Mammary epithelial cell (primary cell): ENCODE measurements at regions of chr6 and their contacts with region 1.

Region 1: GRCh38 chr6:49625140-49625539 is 11.5 kb downstream of the RHAG start:
- DNase-seq: peak; percentile 10
- H3K4me3 ChIP-seq: no peak overlapping the region
- H3K27ac ChIP-seq: no peak overlapping the region
- H3K4me1 ChIP-seq: peaks cover 3% of the 10 kb centered on the region
- H3K27me3 ChIP-seq: no peaks in the 10 kb centered on the region
- CTCF ChIP-seq: no peak

Region 2: DNA sequence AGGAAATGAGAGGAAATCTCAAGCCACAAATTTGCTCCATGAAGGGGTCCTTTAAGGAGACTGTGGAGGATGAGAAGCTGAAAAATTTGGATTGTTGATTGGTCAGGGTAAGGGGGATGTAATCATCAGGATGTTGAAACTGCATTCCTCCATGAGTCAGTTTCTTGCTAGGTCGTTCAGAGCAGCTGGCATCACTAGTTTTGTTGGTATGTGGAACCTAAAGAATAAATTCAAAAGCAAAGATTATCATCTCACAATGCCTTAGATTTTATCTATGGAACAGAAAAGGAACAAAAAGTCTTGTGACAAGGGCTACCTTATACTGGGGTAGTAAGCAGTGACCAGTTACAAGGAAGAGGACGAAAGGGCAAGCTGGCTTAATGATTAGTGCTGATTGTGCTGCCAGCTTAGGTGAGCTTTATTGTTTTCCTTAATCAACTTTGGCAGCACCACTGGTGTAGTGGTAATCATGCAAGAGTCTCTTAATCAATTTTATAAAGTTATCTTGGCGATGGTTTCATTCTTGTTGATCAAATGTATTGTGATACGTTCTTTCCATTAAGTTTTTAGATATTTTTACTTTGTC is 51.6 kb after region 1 on chr6:
- CTCF ChIA-PET with region 1: no interaction called
- dilution Hi-C with region 1: no loop called
- in situ Hi-C with region 1: no loop called
- intact Hi-C with region 1: no loop called
- DNase-seq: peak; percentile 33
- H3K4me3 ChIP-seq: no peak overlapping the region
- H3K27ac ChIP-seq: no peak overlapping the region
- H3K4me1 ChIP-seq: no peaks in the 10 kb centered on the region
- H3K27me3 ChIP-seq: no peaks in the 10 kb centered on the region
- CTCF ChIP-seq: no peak

Region 3: DNA sequence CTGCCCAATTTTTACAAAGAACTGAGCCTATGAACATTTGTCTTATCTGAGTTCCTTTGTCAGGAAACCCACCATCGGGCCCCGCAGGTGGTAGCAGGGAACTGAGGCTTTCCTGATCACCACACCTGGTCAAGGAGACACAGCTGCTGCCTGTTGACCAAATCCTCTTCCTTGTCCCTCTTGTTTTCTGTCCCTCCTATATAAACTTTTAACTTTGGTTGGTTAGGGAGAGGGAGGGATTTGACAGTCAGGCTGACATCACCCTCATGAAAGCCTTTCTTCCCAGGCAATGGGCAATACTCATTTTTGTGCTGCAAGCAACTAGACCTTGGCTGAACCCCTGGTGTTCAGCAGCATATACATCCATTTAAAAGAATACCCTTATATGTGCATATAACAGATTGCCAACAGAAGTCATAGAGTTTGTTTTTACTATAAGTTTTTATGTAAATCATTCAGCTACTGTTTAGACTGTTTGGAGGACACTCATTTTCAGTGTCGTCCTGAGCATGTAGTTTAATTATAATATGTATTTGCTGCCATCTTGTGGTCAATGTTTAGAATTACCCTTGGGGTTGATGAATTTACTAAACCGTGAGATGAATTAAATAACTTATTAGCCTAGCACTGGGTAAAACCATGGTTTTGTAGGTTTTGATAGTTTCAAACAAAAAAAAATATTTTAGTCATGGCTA is 224.2 kb after region 1 on chr6:
- CTCF ChIA-PET with region 1: no interaction called
- dilution Hi-C with region 1: no loop called
- in situ Hi-C with region 1: loop called (anchors 5 kb)
- intact Hi-C with region 1: loop called (anchors 1 kb)
- DNase-seq: peak; percentile 20
- H3K4me3 ChIP-seq: no peak overlapping the region
- H3K27ac ChIP-seq: no peak overlapping the region
- H3K4me1 ChIP-seq: no peaks in the 10 kb centered on the region
- H3K27me3 ChIP-seq: no peaks in the 10 kb centered on the region
- CTCF ChIP-seq: peak; percentile 45 to 55